Activated naive CD8-positive, alpha-beta T cell treated with anti-CD3 and anti-CD28 coated beads, Interleukin-2, amount 10 ng/mL, durations not matched to agents 7 days and 5 days (primary cell): ENCODE measurements at regions of chr6 and their contacts with region 1.

Region 1: DNA sequence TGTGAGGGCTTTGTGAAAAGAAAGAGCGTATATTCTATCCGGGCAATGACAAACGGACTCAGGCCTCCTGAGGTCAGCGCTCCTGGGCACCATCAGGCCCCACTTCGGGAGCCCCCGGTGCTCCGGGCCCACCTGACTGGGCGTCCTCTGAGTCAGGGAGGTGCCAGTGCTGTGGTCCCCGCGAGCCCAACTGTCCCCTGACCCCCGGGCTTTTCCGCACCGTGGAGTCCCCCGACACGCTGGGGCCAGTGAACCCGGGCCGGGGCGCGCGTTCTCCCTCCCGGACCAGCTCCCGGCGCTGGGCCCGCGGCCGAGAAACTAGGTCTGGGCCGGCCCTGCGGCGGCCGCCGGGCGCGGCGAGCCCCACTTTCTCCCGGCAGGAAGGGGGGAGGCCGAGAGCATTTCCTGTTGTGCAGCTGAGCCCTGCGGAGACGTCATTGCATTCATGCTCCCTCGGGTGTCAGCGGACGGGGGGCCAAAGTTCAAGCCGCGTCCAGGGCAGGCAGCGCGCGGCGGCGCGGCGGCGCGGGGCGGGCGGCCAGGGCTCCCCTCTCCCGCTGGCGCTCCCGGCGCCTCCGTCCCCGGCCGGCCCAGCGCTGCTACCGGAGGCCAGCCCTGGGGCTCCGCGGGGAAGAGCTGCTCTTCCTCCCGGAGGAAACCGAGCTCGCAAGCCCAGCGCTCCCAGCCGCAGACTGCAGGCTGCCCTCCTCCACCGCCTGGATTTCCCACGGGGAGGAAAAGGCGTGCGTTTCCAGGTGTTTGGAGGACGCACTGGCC is 18.3 kb downstream of the HIVEP2 start:
- DNase-seq: peak; percentile 81
- ATAC-seq: peak; percentile 87
- H3K4me3 Mint-ChIP-seq: peak overlapping the region; percentile 97
- H3K27ac Mint-ChIP-seq: peak overlapping the region; percentile 95
- H3K4me1 Mint-ChIP-seq: peaks cover 44% of the 10 kb centered on the region
- H3K27me3 Mint-ChIP-seq: no peaks in the 10 kb centered on the region

Region 2: DNA sequence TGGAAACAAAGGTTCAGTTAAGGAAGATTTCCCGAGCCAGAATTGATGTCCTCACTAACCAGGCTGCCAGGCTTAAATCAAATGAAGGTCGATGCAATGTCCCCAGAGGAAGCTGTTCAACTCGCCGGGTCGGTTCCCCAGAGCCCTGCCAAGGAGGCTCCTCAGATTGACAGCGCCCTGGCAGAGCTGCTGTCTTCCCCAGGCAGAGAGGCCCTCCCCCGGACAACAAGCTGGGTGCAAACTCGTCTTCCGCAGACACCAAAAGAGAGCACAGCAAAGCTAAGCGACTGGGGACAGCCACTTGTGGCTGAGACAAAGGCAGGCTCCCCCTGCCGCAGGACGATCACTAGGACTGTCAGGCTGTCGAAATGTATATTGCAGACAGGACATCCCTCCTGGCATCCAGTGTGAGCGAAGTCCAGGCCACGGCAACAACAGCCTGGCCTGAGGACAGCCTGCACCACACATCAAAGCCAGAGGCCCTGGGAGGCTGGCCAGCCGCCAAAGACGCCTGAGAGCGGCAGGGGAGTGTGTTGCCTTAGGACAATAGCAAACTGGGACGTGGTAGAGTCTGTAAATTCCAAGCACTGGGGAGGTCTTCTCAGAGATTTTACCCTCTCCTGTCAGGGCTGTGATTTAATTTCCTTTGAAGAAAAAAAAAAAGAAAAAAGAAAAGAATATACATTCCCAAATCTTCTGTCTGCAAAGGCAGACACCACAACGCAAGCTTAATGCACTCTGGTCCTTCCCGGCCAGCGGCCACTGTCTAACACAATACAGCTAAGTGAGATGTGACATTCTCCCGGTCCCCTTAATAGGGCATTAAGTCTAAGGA is 80.8 kb before region 1 on chr6:
- POLR2A ChIA-PET with region 1: interaction called, 10 read pairs
- DNase-seq: peak; percentile 64
- ATAC-seq: peak; percentile 65
- H3K4me3 Mint-ChIP-seq: peak overlapping the region; percentile 80
- H3K27ac Mint-ChIP-seq: peak overlapping the region; percentile 87
- H3K4me1 Mint-ChIP-seq: peaks cover 75% of the 10 kb centered on the region
- H3K27me3 Mint-ChIP-seq: no peaks in the 10 kb centered on the region

Region 3: DNA sequence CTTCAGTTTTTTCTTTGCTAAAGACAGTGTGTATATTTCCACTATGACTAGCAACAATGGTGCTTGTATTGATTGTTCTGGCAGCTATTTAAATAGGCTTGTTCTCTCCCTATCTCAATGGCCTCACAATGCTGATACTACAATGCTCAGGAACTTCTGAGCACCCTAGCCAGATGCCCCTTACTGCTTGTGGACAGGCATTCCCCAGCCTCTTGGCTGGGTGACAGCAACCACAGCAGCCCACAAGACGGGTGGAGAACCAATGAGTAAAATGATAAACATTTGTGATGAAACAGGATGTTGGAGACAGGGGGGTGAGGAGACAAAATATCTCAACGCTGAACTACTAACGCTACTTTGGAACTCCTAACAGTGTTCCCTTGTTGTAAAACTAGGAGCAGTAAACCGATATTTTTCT is 24.0 kb before region 1 on chr6:
- POLR2A ChIA-PET with region 1: interaction called, 36 read pairs
- DNase-seq: peak; percentile 79
- ATAC-seq: peak; percentile 73
- H3K4me3 Mint-ChIP-seq: peak overlapping the region; percentile 76
- H3K27ac Mint-ChIP-seq: peak overlapping the region; percentile 89
- H3K4me1 Mint-ChIP-seq: peaks cover 57% of the 10 kb centered on the region
- H3K27me3 Mint-ChIP-seq: no peaks in the 10 kb centered on the region

Region 4: GRCh38 chr6:142913511-142914047 is 13.1 kb before region 1 on chr6:
- POLR2A ChIA-PET with region 1: interaction called, 61 read pairs
- DNase-seq: peak; percentile 69
- ATAC-seq: peak; percentile 94
- H3K4me3 Mint-ChIP-seq: peak overlapping the region; percentile 76
- H3K27ac Mint-ChIP-seq: peak overlapping the region; percentile 93
- H3K4me1 Mint-ChIP-seq: peaks cover 63% of the 10 kb centered on the region
- H3K27me3 Mint-ChIP-seq: no peaks in the 10 kb centered on the region

Region 5: DNA sequence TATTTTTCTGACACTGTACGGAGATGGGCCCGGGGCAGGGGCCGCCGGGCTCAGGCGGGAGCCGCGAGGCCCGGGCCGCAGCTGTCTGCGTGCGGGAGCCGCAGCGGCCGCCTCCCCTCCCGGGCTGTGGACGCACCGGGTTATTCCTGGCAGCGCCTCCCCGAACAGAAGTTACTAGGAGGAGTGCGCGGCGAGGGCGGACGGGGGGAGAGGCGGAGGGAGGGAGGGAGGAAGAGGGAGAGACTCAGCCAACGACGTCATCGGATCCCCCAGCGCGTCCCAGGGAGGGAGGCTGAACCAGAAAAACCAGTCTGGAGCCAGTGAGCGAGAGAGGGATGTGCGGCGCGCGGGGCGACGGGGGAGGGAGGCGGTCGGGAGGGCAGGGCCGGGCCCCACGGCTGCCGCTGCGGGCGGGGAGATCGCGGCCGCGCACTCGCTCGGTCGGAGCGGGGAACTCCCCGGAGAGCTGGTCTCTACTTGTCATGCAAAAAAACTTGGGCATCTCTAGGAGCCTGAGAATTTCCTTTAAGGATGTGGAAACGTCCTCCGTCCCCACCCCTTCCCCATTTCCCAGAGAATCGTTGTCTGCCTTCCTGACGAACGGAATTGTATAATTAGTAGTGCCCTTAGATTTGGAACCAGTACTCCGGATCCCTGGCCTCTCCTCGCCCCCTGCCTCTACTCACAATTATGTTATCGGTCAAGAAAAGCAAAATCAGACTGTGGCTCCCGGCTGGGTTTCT is 19.7 kb after region 1 on chr6:
- POLR2A ChIA-PET with region 1: interaction called, 46 read pairs
- DNase-seq: peak; percentile 82
- ATAC-seq: peak; percentile 21
- H3K4me3 Mint-ChIP-seq: peak overlapping the region; percentile 94
- H3K27ac Mint-ChIP-seq: peak overlapping the region; percentile 96
- H3K4me1 Mint-ChIP-seq: peaks cover 32% of the 10 kb centered on the region
- H3K27me3 Mint-ChIP-seq: no peaks in the 10 kb centered on the region

Region 6: DNA sequence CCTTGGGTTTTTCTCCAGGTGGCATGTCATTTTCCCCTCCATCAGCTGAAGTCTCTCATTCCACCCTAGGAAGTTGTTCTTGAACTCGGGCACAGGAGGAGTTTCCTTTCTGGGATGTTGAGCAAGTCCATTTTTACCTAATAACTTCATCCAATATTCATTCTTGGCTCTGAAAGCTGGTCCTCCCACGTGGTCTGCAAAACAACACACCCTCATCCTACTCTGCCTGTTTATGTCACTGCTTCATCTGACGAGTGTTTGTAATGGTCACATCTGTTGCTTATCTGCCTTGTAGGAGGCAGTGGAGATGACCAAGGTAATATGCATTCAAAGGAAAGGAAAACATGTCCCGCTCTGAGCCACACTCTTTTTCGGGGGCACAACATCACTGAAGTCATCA is 92.3 kb after region 1 on chr6:
- POLR2A ChIA-PET with region 1: no interaction called
- DNase-seq: no peak
- ATAC-seq: no peak
- H3K4me3 Mint-ChIP-seq: no peak overlapping the region
- H3K27ac Mint-ChIP-seq: no peak overlapping the region
- H3K4me1 Mint-ChIP-seq: no peaks in the 10 kb centered on the region
- H3K27me3 Mint-ChIP-seq: no peaks in the 10 kb centered on the region